Activated CD4-positive, alpha-beta T cell treated with anti-CD3 and anti-CD28 coated beads for 36 hours (primary cell): ENCODE measurements at regions of chr6 and their contacts with region 1.

Region 1: DNA sequence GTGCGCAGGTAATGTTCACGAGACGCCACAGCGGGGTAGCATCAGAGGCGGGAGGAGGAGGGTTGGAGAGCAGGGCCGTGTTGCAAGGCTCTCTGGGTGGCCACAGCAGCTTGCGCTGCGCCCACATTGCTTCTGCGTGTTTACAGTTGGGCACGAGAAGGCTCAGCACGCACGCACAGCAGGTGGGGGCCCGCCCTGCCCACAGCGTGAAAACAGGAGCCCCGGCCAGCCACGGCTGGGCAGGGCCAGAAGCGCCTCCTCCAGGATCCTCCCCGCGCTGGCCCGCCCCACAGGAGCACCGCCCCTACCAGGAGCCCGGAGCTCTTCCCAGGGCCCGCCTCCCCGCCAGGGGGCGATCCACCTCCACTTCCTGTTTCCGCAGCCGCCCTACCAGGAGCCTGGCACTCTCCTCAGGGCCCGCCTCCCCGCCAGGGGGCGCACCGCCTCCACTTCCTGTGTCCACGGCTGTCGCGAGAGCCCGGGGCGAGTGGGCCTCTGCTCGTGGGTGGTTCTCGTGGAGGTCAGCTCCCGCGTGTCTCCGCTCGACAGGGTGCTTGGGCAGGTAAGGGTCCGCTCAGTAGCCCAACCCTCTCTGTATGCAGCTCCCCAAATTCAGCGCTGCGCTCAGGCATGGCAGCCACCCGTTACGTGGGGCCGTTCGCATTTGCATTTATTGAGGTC is at the start of gene FAM50B:
- DNase-seq: peak; percentile 95
- ATAC-seq: peak; percentile 87
- H3K4me3 Mint-ChIP-seq: peak within 1 kb of the TSS; percentile 73
- H3K27ac Mint-ChIP-seq: peak within 1 kb of the TSS; percentile 85
- H3K4me1 Mint-ChIP-seq: peaks cover 30% of the 10 kb centered on the region
- H3K27me3 Mint-ChIP-seq: no peaks in the 10 kb centered on the region
- total RNA-seq, gene FAM50B: 8.8 to 10.2 TPM

Region 2: GRCh38 chr6:3748208-3749066 is 100.6 kb before region 1 on chr6:
- CTCF ChIA-PET with region 1: interaction called, 11 read pairs
- POLR2A ChIA-PET with region 1: no interaction called
- intact Hi-C with region 1: loop called in 1 of 2 experiments (anchors 2 kb)
- DNase-seq: peak; percentile 82
- ATAC-seq: peak; percentile 90
- H3K4me3 Mint-ChIP-seq: no peak overlapping the region
- H3K27ac Mint-ChIP-seq: no peak overlapping the region
- H3K4me1 Mint-ChIP-seq: peaks cover 2% of the 10 kb centered on the region
- H3K27me3 Mint-ChIP-seq: peaks cover 23% of the 10 kb centered on the region

Region 3: GRCh38 chr6:3876101-3876500 is 27.0 kb after region 1 on chr6:
- CTCF ChIA-PET with region 1: interaction called, 14 read pairs
- POLR2A ChIA-PET with region 1: no interaction called
- intact Hi-C with region 1: no loop called
- DNase-seq: no peak
- ATAC-seq: no peak
- H3K4me3 Mint-ChIP-seq: no peak overlapping the region
- H3K27ac Mint-ChIP-seq: no peak overlapping the region
- H3K4me1 Mint-ChIP-seq: no peaks in the 10 kb centered on the region
- H3K27me3 Mint-ChIP-seq: peaks cover 4% of the 10 kb centered on the region

Region 4: GRCh38 chr6:3929281-3929798 is 80.3 kb after region 1 on chr6:
- CTCF ChIA-PET with region 1: interaction called, 31 read pairs
- POLR2A ChIA-PET with region 1: no interaction called
- intact Hi-C with region 1: loop called (anchors 1 to 2 kb)
- DNase-seq: no peak
- ATAC-seq: no peak
- H3K4me3 Mint-ChIP-seq: no peak overlapping the region
- H3K27ac Mint-ChIP-seq: no peak overlapping the region
- H3K4me1 Mint-ChIP-seq: no peaks in the 10 kb centered on the region
- H3K27me3 Mint-ChIP-seq: peaks cover 3% of the 10 kb centered on the region

Region 5: DNA sequence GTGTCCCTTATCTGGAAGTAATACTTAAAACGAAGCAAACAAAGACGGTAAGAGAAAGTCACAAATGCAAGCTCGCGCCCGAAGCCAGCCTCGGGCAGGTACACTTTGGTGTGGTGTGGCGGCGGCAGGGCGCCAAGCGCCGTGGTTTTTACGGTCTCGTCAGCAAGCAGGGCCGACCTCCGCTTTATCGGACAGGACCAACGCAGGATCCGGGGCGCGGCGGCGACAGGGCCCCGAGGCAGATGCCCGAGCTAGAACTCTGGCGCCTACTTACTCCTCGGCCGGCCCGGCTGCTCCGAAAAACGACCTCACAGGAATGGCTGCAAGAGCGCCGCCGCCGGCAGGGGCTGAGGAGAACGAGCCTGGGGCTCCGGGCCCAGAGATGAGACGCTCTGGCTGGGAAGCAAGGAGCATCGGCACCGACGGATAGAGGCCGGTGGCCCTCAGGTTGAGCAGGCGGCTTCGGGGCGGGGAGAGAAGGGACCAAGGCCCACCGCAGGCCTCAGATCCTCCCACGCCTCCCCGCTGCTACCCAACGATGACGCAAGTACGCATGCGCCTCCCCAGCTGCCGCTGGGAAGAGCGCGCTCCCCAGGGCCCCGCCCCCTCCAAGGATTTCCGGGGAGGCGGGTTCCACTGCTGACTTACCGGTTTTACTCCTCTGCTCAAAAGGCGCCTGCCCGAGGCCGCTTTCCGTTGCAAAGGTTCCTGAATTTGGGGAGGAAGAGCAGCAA is 169.3 kb after region 1 on chr6:
- CTCF ChIA-PET with region 1: interaction called, 6 read pairs
- POLR2A ChIA-PET with region 1: no interaction called
- intact Hi-C with region 1: loop called (anchors 2 to 5 kb)
- DNase-seq: peak; percentile 99
- ATAC-seq: peak; percentile 65
- H3K4me3 Mint-ChIP-seq: peak overlapping the region; percentile 95
- H3K27ac Mint-ChIP-seq: peak overlapping the region; percentile 99
- H3K4me1 Mint-ChIP-seq: peaks cover 53% of the 10 kb centered on the region
- H3K27me3 Mint-ChIP-seq: no peaks in the 10 kb centered on the region

Region 6: GRCh38 chr6:4491906-4492260 is 642.8 kb after region 1 on chr6:
- CTCF ChIA-PET with region 1: no interaction called
- POLR2A ChIA-PET with region 1: no interaction called
- intact Hi-C with region 1: no loop called
- DNase-seq: no peak
- ATAC-seq: no peak
- H3K4me3 Mint-ChIP-seq: no peak overlapping the region
- H3K27ac Mint-ChIP-seq: no peak overlapping the region
- H3K4me1 Mint-ChIP-seq: no peaks in the 10 kb centered on the region
- H3K27me3 Mint-ChIP-seq: peaks cover 5% of the 10 kb centered on the region

Region 7: DNA sequence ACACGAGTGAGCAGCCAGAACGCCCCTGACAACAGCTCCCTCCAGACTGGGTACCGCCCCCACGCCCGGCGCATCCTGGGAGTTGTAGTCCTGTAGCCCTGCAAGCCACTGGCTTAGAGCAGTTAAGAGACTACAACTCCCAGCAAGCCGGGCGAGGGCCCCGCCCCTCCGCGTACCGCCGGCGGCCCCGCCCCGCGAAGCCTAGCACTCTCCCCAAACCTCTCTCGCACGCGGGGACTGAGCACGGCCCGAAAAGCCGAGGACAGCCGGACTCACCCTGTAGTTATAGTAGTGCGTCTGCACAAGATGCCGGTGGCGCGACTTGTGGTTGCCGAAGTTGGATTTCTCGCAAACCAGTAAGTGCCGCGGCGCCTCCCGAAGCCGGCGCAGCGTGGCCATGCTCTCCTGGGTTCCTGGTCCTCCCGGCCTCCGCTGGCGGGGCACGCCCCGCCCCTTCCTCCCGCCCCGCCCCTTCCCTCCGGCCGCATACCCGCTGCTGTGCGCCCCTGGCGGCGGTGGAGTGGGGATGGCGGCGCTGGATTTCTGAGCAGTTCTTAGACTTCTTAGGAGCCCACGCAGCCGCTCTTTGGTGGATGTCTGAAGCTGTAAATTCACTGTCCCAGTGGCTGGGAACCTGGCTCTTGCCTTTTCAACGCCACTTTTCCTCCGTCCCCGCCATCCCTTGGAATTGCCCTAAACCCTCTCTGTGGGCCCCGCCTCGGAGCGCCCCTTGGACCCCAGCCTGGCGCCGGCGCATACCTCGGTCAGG is 1154.7 kb after region 1 on chr6 and contains the start of gene RPP40:
- CTCF ChIA-PET with region 1: no interaction called
- POLR2A ChIA-PET with region 1: no interaction called
- intact Hi-C with region 1: loop called in 1 of 2 experiments (anchors 5 kb)
- DNase-seq: peak; percentile 99
- ATAC-seq: peak; percentile 97
- H3K4me3 Mint-ChIP-seq: peak within 1 kb of the TSS; percentile 87
- H3K27ac Mint-ChIP-seq: peak within 1 kb of the TSS; percentile 94
- H3K4me1 Mint-ChIP-seq: peaks cover 8% of the 10 kb centered on the region
- H3K27me3 Mint-ChIP-seq: no peaks in the 10 kb centered on the region
- total RNA-seq, gene RPP40: 7.7 to 11.2 TPM